Left cardiac atrium (tissue), 4 donors: ENCODE measurements at regions of chr16 and their contacts with region 1.

Region 1: GRCh38 chr16:85316321-85316919 is 204.1 kb upstream of the CIBAR2 start:
- DNase-seq: peak; percentile 72
- ATAC-seq: peak; percentile 61 to 74

Region 2: GRCh38 chr16:85369741-85370528 is 53.5 kb after region 1 on chr16:
- intact Hi-C with region 1: loop called in 1 of 2 experiments (anchors 10 kb)
- DNase-seq: peak; percentile 74
- ATAC-seq: peak; percentile 53 to 59